ENCODE measurements at regions of chr1 and their contacts with region 1.

Region 1: DNA sequence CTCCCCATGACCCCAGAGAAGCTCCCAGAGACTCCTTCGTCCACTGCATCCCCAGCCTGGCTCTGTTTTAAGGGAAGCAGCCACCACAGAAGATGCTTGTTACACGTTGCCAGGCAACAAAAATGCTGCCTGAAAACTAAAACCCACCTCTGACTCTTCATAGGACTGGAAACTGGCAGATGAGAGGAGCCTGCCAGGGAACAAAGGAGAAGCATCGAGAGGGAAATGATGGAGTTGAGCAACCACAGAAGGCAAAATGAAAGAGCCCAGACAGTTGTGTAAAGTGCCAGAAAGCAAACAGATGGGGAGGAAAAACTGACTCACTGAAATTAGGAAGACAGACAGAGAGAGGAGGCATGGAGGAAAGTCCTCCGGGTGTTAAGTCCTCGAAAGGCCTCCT is 118.4 kb downstream of the KCNN3 start:
- DNase-seq: no peak
- H3K4me3 ChIP-seq: no peak overlapping the region
- H3K27ac ChIP-seq: no peak overlapping the region
- H3K4me1 ChIP-seq: peaks cover 0 to 2% of the 10 kb centered on the region in 2 donors
- H3K27me3 ChIP-seq: no peaks in the 10 kb centered on the region
- CTCF ChIP-seq: no peak
- POLR2A ChIP-seq: no peak

Region 2: GRCh38 chr1:154391086-154391770 is 360.5 kb before region 1 on chr1:
- intact Hi-C with region 1: no loop called
- DNase-seq: no peak
- H3K4me3 ChIP-seq: no peak overlapping the region
- H3K27ac ChIP-seq: no peak overlapping the region
- H3K4me1 ChIP-seq: no peaks in the 10 kb centered on the region
- H3K27me3 ChIP-seq: no peaks in the 10 kb centered on the region
- CTCF ChIP-seq: no peak
- POLR2A ChIP-seq: no peak

Region 3: DNA sequence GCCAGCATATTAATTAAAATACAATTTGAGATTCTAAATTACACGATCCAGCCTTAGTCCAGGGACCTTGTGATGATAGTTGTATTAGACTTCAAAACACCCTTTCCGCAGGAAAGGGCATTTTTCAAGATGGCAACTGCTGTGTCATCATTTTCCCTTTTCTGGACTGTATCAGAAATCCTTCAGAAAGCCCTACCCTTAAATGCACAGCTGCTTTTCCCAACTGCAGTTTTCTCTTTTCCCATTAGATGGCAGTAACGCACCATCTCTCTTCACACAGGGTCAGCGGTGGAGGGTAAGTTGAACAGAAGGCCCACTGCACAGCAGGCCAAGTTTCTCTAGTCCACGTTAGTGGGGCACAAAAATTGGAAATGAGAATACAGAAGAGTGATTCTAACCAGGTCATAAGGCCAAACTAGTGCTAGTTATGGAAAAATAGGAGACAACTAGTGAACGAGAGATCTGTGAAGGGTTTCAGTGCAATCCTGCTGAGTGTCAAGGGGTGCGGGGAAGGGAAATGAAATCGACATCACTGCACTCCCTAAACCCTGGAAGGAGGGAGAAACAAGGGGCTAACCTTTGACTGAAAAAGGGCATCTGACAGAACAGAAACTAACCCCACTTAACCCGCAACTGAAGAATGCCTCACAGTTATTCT is 271.8 kb before region 1 on chr1:
- intact Hi-C with region 1: loop called (anchors 5 kb)
- DNase-seq: peak; percentile 56 to 61
- H3K4me3 ChIP-seq: no peak overlapping the region
- H3K27ac ChIP-seq: no peak overlapping the region
- H3K4me1 ChIP-seq: peaks cover 9 to 18% of the 10 kb centered on the region in 2 donors
- H3K27me3 ChIP-seq: no peaks in the 10 kb centered on the region
- CTCF ChIP-seq: peak; percentile 83 to 98 (median 96)
- POLR2A ChIP-seq: no peak

Region 4: GRCh38 chr1:154559466-154560088 is 192.1 kb before region 1 on chr1:
- intact Hi-C with region 1: loop called (anchors 5 kb)
- DNase-seq: peak; percentile 87 to 89
- H3K4me3 ChIP-seq: peak overlapping the region in 2 of 3 donors; percentile 33 to 38
- H3K27ac ChIP-seq: peak overlapping the region; percentile 76 to 89 (median 83)
- H3K4me1 ChIP-seq: peaks cover 20 to 28% of the 10 kb centered on the region in 2 donors
- H3K27me3 ChIP-seq: no peaks in the 10 kb centered on the region
- CTCF ChIP-seq: peak; percentile 84 to 97 (median 91)
- POLR2A ChIP-seq: no peak

Region 5: DNA sequence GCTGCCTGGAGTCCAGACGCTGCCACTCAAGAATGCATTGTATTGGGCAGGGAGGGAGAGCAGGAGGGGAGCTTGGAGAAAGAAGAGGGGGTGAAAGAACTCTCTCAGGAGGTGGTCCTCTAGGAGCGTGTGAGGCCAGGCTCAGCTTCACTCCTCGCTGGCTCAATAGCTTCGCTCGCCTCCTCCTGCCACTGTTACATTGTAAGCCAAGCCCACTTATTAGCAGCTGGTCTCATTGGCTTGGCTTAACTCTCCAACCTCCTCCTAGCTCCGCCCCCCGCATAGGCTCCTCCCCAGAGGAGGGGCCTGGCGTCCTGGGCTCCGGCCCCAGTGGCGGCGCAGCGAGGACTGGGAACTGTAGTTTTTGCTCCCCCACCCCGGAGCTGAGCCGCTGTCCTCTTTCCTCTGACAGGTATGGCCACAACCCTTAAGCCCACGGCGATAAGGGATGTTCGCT is 118.5 kb after region 1 on chr1 and contains the start of gene KCNN3:
- intact Hi-C with region 1: loop called (anchors 10 kb)
- DNase-seq: peak; percentile 96 to 97
- H3K4me3 ChIP-seq: peak within 1 kb of the TSS in 2 of 3 donors; percentile 21 to 38
- H3K27ac ChIP-seq: peak within 1 kb of the TSS; percentile 10 to 49 (median 12)
- H3K4me1 ChIP-seq: peaks cover 16 to 24% of the 10 kb centered on the region in 2 donors
- H3K27me3 ChIP-seq: no peaks in the 10 kb centered on the region
- CTCF ChIP-seq: peak in 1 of 6 experiments; percentile 3
- POLR2A ChIP-seq: peak in 1 of 2 donors; percentile 83
- total RNA-seq, gene KCNN3: 3.5 to 5.6 (median 4.4) TPM

Region 6: DNA sequence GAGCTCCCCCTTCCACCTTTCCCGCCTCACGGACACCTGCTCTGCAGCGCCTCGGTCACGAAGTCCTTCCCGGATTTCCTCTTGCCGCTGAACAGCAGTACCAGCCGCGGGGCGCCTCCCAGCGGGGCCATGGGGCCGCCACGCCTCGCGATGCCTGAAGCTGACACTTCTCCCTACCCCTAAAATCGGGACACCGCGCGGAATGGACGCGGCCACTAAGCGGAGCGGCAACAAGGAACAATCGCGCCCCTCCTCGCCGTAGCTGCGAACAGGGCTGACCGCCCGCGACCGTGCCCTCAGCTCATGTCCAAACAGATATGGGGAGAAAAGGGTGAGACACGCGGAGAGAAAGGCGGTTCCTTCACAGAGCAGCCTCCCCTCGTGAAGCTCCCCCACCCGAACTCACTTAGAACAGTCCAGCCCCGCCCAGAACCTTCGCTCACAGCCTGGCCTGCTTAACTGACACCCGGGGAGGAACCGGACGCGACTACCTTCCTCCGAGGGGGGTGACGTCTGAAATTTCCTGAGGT is 184.9 kb after region 1 on chr1 and contains the start of gene PMVK:
- intact Hi-C with region 1: no loop called
- DNase-seq: peak; percentile 98
- H3K4me3 ChIP-seq: peak within 1 kb of the TSS in 2 of 3 donors; percentile 33 to 50
- H3K27ac ChIP-seq: peak within 1 kb of the TSS; percentile 98 to 99 (median 99)
- H3K4me1 ChIP-seq: peaks cover 16 to 37% of the 10 kb centered on the region in 2 donors
- H3K27me3 ChIP-seq: no peaks in the 10 kb centered on the region
- CTCF ChIP-seq: peak in 4 of 6 experiments; percentile 25 to 42 (median 31)
- POLR2A ChIP-seq: peak in 1 of 2 donors; percentile 75
- total RNA-seq, gene PMVK: 15.0 to 28.2 (median 21.2) TPM

Measured in thyroid gland (tissue), 4 donors.